ENCODE measurements at regions of chr9 and their contacts with region 1.

Region 1: GRCh38 chr9:93064392-93065134 is 6.1 kb downstream of the SUSD3 start:
- DNase-seq: peak; percentile 98
- H3K4me3 Mint-ChIP-seq: peak overlapping the region; percentile 86
- H3K27ac Mint-ChIP-seq: peak overlapping the region; percentile 99
- H3K4me1 Mint-ChIP-seq: peaks cover 91% of the 10 kb centered on the region
- H3K27me3 Mint-ChIP-seq: no peaks in the 10 kb centered on the region

Region 2: GRCh38 chr9:92325269-92325990 is 739.1 kb before region 1 on chr9 and contains the starts of genes CENPP and NOL8:
- CTCF ChIA-PET with region 1: no interaction called
- intact Hi-C with region 1: loop called (anchors 10 kb)
- DNase-seq: peak; percentile 88
- H3K4me3 Mint-ChIP-seq: peak within 1 kb of the TSS; percentile 99
- H3K27ac Mint-ChIP-seq: peak within 1 kb of the TSS; percentile 97
- H3K4me1 Mint-ChIP-seq: peaks cover 41% of the 10 kb centered on the region
- H3K27me3 Mint-ChIP-seq: no peaks in the 10 kb centered on the region
- total RNA-seq, gene CENPP: 24.9 to 26.5 TPM
- total RNA-seq, gene NOL8: 41.0 to 46.2 TPM

Region 3: DNA sequence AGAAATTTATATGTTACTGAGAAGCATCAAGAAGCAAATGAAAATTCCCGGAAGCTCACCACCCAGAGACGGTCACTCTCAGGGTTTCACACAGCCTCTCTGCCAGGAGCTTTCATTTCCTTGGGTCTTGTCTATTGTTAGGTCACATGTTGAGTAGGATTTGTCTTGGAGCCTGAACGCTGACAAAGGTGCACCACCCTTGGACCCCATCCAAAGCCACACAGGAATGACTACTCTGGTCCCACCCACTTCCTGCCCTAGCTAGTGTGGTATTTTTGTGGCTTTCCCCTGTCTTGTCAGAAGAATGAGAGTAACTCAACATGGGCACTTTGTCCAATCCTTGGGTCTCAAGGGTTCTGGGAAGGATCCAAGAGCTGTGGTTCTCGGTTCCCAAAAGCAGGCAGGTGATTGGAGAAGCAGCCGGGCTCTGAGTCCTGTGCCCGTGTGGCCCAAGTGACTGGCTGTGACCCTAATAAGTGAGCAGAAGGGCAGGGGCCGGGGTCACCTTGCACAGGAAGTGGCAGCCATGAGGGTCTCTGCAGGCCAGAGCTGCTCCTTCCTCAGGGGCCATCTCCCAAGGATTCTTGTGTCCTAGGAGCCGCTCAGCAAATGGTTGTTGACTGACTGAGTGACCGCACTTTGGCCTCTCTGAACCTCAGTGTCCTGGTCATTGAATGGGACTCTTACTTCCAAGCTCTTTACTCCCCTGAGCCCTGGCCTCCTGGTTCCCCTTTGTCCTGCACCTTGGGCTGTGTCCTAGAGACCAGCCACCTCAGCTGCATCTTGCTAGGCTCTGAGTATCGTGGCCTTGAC is 110.3 kb before region 1 on chr9:
- CTCF ChIA-PET with region 1: interaction called, 3 read pairs
- intact Hi-C with region 1: loop called (anchors 1 kb)
- DNase-seq: peak; percentile 95
- H3K4me3 Mint-ChIP-seq: peak overlapping the region; percentile 60
- H3K27ac Mint-ChIP-seq: peak overlapping the region; percentile 91
- H3K4me1 Mint-ChIP-seq: peaks cover 75% of the 10 kb centered on the region
- H3K27me3 Mint-ChIP-seq: no peaks in the 10 kb centered on the region

Region 4: DNA sequence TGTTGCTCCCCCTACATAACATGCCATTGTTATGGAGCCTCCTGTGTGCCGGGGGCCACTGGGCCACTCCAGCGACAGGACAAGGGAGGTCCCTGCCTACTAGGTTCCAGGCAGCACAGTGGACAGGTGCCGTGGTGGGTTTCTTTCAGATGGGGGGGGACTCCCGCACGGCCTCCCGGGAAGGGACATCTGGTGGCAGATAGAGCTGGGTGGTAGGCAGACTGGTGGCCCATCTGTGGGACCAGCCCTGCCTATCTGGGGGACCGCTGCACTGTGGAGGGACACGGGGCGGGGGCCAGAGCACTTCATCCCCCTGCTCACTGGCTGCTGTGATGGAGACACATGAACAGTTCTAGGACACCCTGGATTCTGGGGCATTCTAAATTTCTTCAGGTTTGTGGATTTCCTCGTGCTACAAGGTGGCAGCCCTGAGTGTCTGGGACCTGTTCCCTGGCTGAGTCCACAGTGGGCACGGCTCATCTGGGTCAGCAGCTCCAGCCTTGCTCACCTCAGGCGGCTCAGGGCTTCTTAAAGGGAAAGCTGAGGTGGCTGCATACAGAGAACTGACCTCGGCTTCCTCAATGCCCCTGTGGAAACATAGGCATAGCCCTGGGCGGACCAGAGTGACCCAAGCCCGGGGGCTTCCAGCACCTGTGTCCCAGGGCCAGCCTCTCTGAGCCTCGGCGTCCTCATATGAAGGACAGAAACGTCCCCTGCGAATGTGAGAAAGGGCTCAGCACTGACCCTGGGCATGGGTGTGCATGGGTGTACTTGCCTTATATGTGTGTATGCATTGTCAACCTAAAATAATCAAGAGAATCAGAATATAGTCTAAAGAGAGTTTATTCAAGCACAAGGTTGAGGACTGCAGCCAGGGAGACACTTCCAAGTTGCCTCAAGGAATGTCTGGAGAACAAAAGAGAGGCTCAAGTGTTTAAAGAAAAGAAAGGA is 94.8 kb before region 1 on chr9:
- CTCF ChIA-PET with region 1: interaction called, 4 read pairs
- intact Hi-C with region 1: loop called (anchors 2 kb)
- DNase-seq: no peak
- H3K4me3 Mint-ChIP-seq: peak overlapping the region; percentile 99
- H3K27ac Mint-ChIP-seq: peak overlapping the region; percentile 100
- H3K4me1 Mint-ChIP-seq: peaks cover 78% of the 10 kb centered on the region
- H3K27me3 Mint-ChIP-seq: no peaks in the 10 kb centered on the region

Region 5: DNA sequence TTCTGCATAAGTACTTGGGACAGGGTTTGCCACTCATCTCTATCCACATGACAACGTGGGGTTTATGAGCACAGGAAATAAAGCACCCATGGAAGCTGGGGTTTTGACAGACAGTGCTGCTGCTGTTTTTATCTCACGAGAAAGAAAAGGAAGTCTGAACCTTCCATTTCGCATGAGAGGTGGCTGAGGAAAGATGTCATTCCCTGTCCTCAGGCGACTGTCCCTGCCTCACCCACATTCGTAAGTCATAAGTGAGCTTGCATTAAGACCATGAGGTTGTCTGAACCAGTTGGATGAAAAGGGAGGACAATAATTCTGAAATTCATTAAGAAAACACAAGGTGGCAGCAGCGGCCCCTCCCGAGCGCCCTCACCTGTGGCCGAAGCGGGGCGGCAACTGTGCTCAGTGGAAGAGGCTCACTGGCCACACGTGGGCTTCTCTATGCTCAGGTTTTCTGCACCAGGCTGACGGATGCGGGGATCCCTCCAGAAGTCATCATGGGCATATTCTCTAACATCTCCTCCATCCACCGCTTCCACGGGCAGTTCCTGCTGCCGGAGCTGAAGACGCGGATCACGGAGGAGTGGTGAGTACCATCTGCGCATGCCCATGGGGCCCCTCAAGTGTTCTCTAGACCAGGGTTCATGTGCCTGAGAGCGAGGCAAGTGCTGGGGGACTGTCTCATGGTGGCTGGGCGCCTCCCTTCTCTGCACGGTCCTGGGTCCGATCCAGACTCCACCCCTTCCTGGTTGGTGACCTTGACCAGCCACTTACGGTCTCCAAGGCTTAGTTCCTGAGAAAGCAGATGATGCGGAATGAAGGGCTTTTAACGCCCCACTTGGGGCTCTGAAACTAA is 60.8 kb before region 1 on chr9:
- CTCF ChIA-PET with region 1: interaction called, 12 read pairs
- intact Hi-C with region 1: loop called (anchors 1 kb)
- DNase-seq: peak; percentile 82
- H3K4me3 Mint-ChIP-seq: no peak overlapping the region
- H3K27ac Mint-ChIP-seq: peak overlapping the region; percentile 90
- H3K4me1 Mint-ChIP-seq: peaks cover 54% of the 10 kb centered on the region
- H3K27me3 Mint-ChIP-seq: no peaks in the 10 kb centered on the region

Region 6: GRCh38 chr9:93082841-93083411 is 18.4 kb after region 1 on chr9:
- CTCF ChIA-PET with region 1: interaction called, 8 read pairs
- intact Hi-C with region 1: loop called (anchors 1 kb)
- DNase-seq: peak; percentile 49
- H3K4me3 Mint-ChIP-seq: no peak overlapping the region
- H3K27ac Mint-ChIP-seq: peak overlapping the region; percentile 95
- H3K4me1 Mint-ChIP-seq: peaks cover 40% of the 10 kb centered on the region
- H3K27me3 Mint-ChIP-seq: no peaks in the 10 kb centered on the region

Region 7: GRCh38 chr9:93143830-93144530 is 79.4 kb after region 1 on chr9:
- CTCF ChIA-PET with region 1: interaction called, 3 read pairs
- intact Hi-C with region 1: loop called (anchors 2 kb)
- DNase-seq: peak; percentile 67
- H3K4me3 Mint-ChIP-seq: no peak overlapping the region
- H3K27ac Mint-ChIP-seq: peak overlapping the region; percentile 79
- H3K4me1 Mint-ChIP-seq: peaks cover 68% of the 10 kb centered on the region
- H3K27me3 Mint-ChIP-seq: no peaks in the 10 kb centered on the region